K562 (cell line): ENCODE measurements at regions of chr22 and their contacts with region 1.

Region 1: GRCh38 chr22:18077639-18078328 is at the start of gene PEX26:
- DNase-seq: peak; percentile 94 to 98 (median 95)
- ATAC-seq: peak; percentile 99
- H3K4me3 ChIP-seq: peak within 1 kb of the TSS; percentile 84
- H3K27ac ChIP-seq: peak within 1 kb of the TSS; percentile 70
- H3K4me1 ChIP-seq: peaks cover 5 to 9% of the 10 kb centered on the region in 2 experiments; a peak in 4 of 5 replicates
- H3K27me3 ChIP-seq: no peaks in the 10 kb centered on the region
- CTCF ChIP-seq: peak in 1 of 3 experiments; percentile 15; a peak in 2 of 6 replicates
- EP300 ChIP-seq: no peak
- POLR2A ChIP-seq: peak; percentile 86
- RAD21 ChIP-seq: no peak
- polyA plus RNA-seq, gene PEX26: 0.35 to 0.72 TPM

Region 2: GRCh38 chr22:17562906-17563870 is 514.6 kb before region 1 on chr22 and contains the start of gene SLC25A18:
- CTCF ChIA-PET with region 1: interaction called, 3 read pairs
- POLR2A ChIA-PET with region 1: no interaction called
- in situ Hi-C with region 1: loop called (anchors 10 kb)
- intact Hi-C with region 1: loop called (anchors 1 kb)
- DNase-seq: peak; percentile 37 to 47 (median 44)
- ATAC-seq: peak; percentile 56
- H3K4me3 ChIP-seq: no peak within 1 kb of the TSS
- H3K27ac ChIP-seq: no peak within 1 kb of the TSS
- H3K4me1 ChIP-seq: 0 out of 5 replicates have a peak, but pooled peaks cover 0 to 4% of the 10 kb centered on the region in 2 experiments
- H3K27me3 ChIP-seq: peaks cover 38 to 44% of the 10 kb centered on the region in 2 experiments
- CTCF ChIP-seq: peak; percentile 11 to 32 (median 25); a peak in 2 of 6 replicates
- EP300 ChIP-seq: no peak
- POLR2A ChIP-seq: no peak
- RAD21 ChIP-seq: no peak
- polyA plus RNA-seq, gene SLC25A18: 0.04 TPM in 1 of 2 experiments, not detected in the other

Region 3: GRCh38 chr22:17785185-17786184 is 292.3 kb before region 1 on chr22:
- CTCF ChIA-PET with region 1: no interaction called
- POLR2A ChIA-PET with region 1: interaction called, 4 read pairs
- in situ Hi-C with region 1: no loop called
- intact Hi-C with region 1: loop called (anchors 2 kb)
- DNase-seq: peak; percentile 85 to 91 (median 87)
- ATAC-seq: peak; percentile 82
- H3K4me3 ChIP-seq: no peak overlapping the region
- H3K27ac ChIP-seq: peak overlapping the region; percentile 77; the same call in 1 of the 3 replicates
- H3K4me1 ChIP-seq: peaks cover 33 to 68% of the 10 kb centered on the region in 2 experiments; a peak in 4 of 5 replicates
- H3K27me3 ChIP-seq: no peaks in the 10 kb centered on the region; a peak in 1 of 5 replicates
- CTCF ChIP-seq: peak; percentile 88 to 97 (median 92)
- EP300 ChIP-seq: no peak
- POLR2A ChIP-seq: no peak
- RAD21 ChIP-seq: peak; percentile 44 to 84

Region 4: GRCh38 chr22:17891481-17892167 is 186.2 kb before region 1 on chr22:
- CTCF ChIA-PET with region 1: interaction called, 19 read pairs
- POLR2A ChIA-PET with region 1: interaction called, 5 read pairs
- in situ Hi-C with region 1: no loop called
- intact Hi-C with region 1: loop called (anchors 1 kb)
- DNase-seq: peak; percentile 51 to 59 (median 55)
- ATAC-seq: peak; percentile 84
- H3K4me3 ChIP-seq: no peak overlapping the region
- H3K27ac ChIP-seq: no peak overlapping the region
- H3K4me1 ChIP-seq: no peaks in the 10 kb centered on the region
- H3K27me3 ChIP-seq: no peaks in the 10 kb centered on the region
- CTCF ChIP-seq: peak; percentile 67 to 78 (median 68)
- EP300 ChIP-seq: no peak
- POLR2A ChIP-seq: no peak
- RAD21 ChIP-seq: peak; percentile 26 to 73; a peak in 3 of 4 replicates

Region 5: DNA sequence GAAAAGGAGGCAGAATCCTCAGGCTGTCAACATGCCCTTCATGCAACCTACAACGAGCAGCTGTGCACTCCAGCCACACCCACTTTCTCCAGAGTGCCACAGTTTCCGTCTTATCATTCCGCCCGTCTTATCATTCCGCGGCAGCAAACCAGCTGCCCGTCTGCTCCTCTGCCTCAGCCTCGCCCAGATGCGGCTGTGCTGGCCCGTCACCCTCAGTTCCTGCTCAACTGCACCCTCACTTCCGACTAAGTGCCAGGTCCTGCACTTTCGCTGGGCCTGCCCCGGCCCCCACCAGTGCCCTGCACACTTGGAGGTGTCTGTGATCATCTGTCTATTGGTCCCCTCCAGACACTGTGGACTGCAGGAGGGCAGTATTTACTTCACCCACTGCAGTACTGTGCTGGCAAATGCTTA is 97.1 kb before region 1 on chr22:
- CTCF ChIA-PET with region 1: no interaction called
- POLR2A ChIA-PET with region 1: no interaction called
- in situ Hi-C with region 1: no loop called
- intact Hi-C with region 1: loop called (anchors 2 kb)
- DNase-seq: peak; percentile 90 to 96 (median 92)
- ATAC-seq: peak; percentile 92
- H3K4me3 ChIP-seq: no peak overlapping the region; the same call in 1 of the 2 replicates
- H3K27ac ChIP-seq: peak overlapping the region; percentile 44; the same call in 2 of the 3 replicates
- H3K4me1 ChIP-seq: peaks cover 35 to 37% of the 10 kb centered on the region in 2 experiments
- H3K27me3 ChIP-seq: no peaks in the 10 kb centered on the region
- CTCF ChIP-seq: no peak
- EP300 ChIP-seq: peak; percentile 96
- POLR2A ChIP-seq: no peak
- RAD21 ChIP-seq: no peak; a peak in 1 of 4 replicates

Region 6: GRCh38 chr22:18012531-18012930 is 65.3 kb before region 1 on chr22:
- CTCF ChIA-PET with region 1: no interaction called
- POLR2A ChIA-PET with region 1: no interaction called
- in situ Hi-C with region 1: no loop called
- intact Hi-C with region 1: no loop called
- DNase-seq: no peak
- ATAC-seq: peak; percentile 40
- H3K4me3 ChIP-seq: no peak overlapping the region
- H3K27ac ChIP-seq: no peak overlapping the region
- H3K4me1 ChIP-seq: no peaks in the 10 kb centered on the region
- H3K27me3 ChIP-seq: peaks cover 9 to 15% of the 10 kb centered on the region in 2 experiments
- CTCF ChIP-seq: no peak
- EP300 ChIP-seq: no peak
- POLR2A ChIP-seq: no peak
- RAD21 ChIP-seq: no peak

Region 7: GRCh38 chr22:18024276-18024947 is 53.4 kb before region 1 on chr22 and contains the start of gene MICAL3:
- CTCF ChIA-PET with region 1: interaction called, 3 read pairs
- POLR2A ChIA-PET with region 1: interaction called, 3 read pairs
- in situ Hi-C with region 1: no loop called
- intact Hi-C with region 1: loop called (anchors 5 kb)
- DNase-seq: peak; percentile 68 to 85 (median 74)
- ATAC-seq: peak; percentile 97
- H3K4me3 ChIP-seq: peak within 1 kb of the TSS; percentile 40
- H3K27ac ChIP-seq: no peak within 1 kb of the TSS
- H3K4me1 ChIP-seq: peaks cover 6 to 14% of the 10 kb centered on the region in 2 experiments; a peak in 4 of 5 replicates
- H3K27me3 ChIP-seq: peaks cover 18 to 21% of the 10 kb centered on the region in 2 experiments; a peak in 4 of 5 replicates
- CTCF ChIP-seq: peak; percentile 76 to 86 (median 82)
- EP300 ChIP-seq: no peak
- POLR2A ChIP-seq: no peak
- RAD21 ChIP-seq: peak; percentile 62 to 86
- polyA plus RNA-seq, gene MICAL3: 0.53 to 0.56 TPM

Region 8: GRCh38 chr22:18133452-18133851 is 55.7 kb after region 1 on chr22:
- CTCF ChIA-PET with region 1: no interaction called
- POLR2A ChIA-PET with region 1: no interaction called
- in situ Hi-C with region 1: no loop called
- intact Hi-C with region 1: no loop called
- DNase-seq: no peak
- ATAC-seq: no peak
- H3K4me3 ChIP-seq: no peak overlapping the region
- H3K27ac ChIP-seq: no peak overlapping the region
- H3K4me1 ChIP-seq: peaks cover 0 to 4% of the 10 kb centered on the region in 2 experiments; a peak in 1 of 5 replicates
- H3K27me3 ChIP-seq: peaks cover 0 to 7% of the 10 kb centered on the region in 2 experiments; a peak in 2 of 5 replicates
- CTCF ChIP-seq: no peak
- EP300 ChIP-seq: no peak
- POLR2A ChIP-seq: no peak
- RAD21 ChIP-seq: no peak